ENCODE measurements at regions of chr21 and their contacts with region 1.

Region 1: GRCh38 chr21:16534408-16535101 is 804.8 kb downstream of the USP25 start:
- DNase-seq: peak; percentile 89 to 90
- H3K4me3 ChIP-seq: peak overlapping the region in 2 of 3 donors; percentile 1 to 27
- H3K27ac ChIP-seq: peak overlapping the region; percentile 88 to 96 (median 89)
- H3K4me1 ChIP-seq: peaks cover 10 to 15% of the 10 kb centered on the region in 2 donors
- H3K27me3 ChIP-seq: no peaks in the 10 kb centered on the region
- CTCF ChIP-seq: no peak
- POLR2A ChIP-seq: peak in 1 of 2 donors; percentile 58

Region 2: GRCh38 chr21:16420031-16420724 is 114.4 kb before region 1 on chr21:
- intact Hi-C with region 1: loop called (anchors 10 kb)
- DNase-seq: peak; percentile 70 to 73
- H3K4me3 ChIP-seq: peak overlapping the region in 2 of 3 donors; percentile 20 to 66
- H3K27ac ChIP-seq: peak overlapping the region; percentile 89 to 95 (median 91)
- H3K4me1 ChIP-seq: peaks cover 4 to 26% of the 10 kb centered on the region in 2 donors
- H3K27me3 ChIP-seq: no peaks in the 10 kb centered on the region
- CTCF ChIP-seq: no peak
- POLR2A ChIP-seq: no peak